ENCODE measurements at regions of chr17 and their contacts with region 1.

Region 1: GRCh38 chr17:43360739-43361505 is 37.9 kb upstream of the ARL4D start:
- DNase-seq: peak; percentile 68 to 97
- H3K4me3 ChIP-seq: peak overlapping the region; percentile 61 to 63
- H3K27ac ChIP-seq: peak overlapping the region; percentile 77 to 90
- H3K4me1 ChIP-seq: peaks cover 0 to 18% of the 10 kb centered on the region in 2 donors
- H3K27me3 ChIP-seq: no peaks in the 10 kb centered on the region
- CTCF ChIP-seq: no peak

Region 2: DNA sequence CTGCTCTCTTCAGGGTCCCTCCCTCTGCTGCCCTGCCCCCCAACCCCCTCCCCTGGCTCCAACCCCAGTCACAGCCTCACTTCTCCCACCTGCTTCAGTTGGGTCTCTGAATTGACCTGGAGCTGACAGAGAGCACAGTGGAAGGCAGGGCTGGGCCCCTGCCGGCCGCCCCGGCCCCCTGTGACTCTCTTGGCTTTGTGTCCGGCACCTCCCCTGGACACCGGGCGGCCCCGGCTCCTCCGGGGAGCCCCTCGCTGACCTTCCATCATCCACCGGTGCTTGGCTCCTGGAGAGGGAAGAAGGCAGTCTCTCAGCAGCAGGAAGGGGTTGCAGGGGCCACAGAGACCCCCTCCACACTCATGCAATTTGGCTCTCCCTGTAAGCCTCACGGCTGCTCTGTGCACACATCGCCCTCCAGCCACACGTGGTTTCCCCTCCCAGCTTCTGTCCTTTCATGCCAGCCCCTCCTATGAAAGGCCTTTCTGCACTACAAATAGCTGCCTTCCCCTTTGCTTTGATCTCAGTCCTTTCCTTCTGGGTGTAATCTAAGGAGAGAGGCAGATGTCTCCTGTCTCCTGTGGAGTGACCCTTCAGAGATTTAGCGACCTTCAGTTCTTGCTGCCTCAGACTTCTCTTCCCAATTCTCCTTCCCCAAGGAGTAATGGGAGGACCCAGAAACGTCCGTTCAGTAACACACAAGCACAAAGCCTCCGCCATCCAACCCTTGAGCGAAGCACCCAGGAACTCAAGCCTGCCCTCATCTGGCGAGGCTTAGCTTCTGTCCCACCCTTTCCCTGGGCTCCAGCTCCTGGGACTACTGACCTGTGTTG is 1332.7 kb before region 1 on chr17:
- intact Hi-C with region 1: no loop called
- DNase-seq: no peak
- H3K4me3 ChIP-seq: no peak overlapping the region
- H3K27ac ChIP-seq: no peak overlapping the region
- H3K4me1 ChIP-seq: peaks cover 0 to 11% of the 10 kb centered on the region in 2 donors
- H3K27me3 ChIP-seq: no peaks in the 10 kb centered on the region
- CTCF ChIP-seq: no peak

Region 3: GRCh38 chr17:43316522-43317142 is 44.3 kb before region 1 on chr17:
- intact Hi-C with region 1: loop called (anchors 2 kb)
- DNase-seq: peak in 1 of 2 donors; percentile 63
- H3K4me3 ChIP-seq: no peak overlapping the region
- H3K27ac ChIP-seq: no peak overlapping the region
- H3K4me1 ChIP-seq: peaks cover 0 to 2% of the 10 kb centered on the region in 2 donors
- H3K27me3 ChIP-seq: no peaks in the 10 kb centered on the region
- CTCF ChIP-seq: no peak

Region 4: DNA sequence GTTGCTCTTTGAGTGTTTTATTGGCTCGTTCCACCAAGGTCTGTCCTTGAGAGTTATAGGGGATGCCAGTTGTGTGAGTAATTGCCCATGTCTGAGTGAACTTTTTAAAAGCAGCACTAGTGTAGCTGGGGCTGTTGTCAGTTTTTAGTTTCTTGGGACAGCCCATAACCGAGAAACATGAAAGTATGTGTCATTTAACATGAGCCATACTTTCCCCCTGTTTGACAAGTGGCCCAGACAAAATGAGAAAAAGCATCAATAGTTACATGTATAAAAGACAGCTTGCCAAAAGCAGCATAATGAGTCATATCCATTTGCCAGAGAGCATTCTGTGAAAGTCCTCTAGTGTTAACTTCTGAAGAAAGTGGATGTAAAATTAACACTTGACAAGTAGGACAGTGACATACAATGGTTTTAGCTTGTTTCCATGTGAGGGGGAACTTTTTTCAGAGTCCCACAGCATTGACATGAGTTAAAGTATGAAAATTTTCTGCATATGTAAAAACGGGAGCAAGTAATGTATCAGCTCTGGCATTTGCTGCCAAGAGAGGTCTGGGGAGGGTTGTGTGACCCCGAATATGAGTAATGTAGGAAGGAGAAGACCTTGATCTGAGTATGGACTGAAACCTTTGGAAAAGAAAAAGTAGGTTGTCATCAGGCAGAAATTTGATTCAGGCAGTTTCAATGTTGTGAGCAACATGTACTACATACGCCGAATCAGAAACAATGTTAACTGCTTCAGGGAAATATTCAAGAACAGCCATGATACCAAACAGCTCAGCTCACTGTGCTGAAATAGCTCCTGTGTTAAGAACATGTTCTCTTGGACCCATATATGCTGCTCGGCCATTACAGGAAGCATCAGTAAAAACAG is 19.0 kb before region 1 on chr17:
- intact Hi-C with region 1: loop called (anchors 1 kb)
- DNase-seq: no peak
- H3K4me3 ChIP-seq: no peak overlapping the region
- H3K27ac ChIP-seq: peak overlapping the region; percentile 20 to 33
- H3K4me1 ChIP-seq: peaks cover 0 to 5% of the 10 kb centered on the region in 2 donors
- H3K27me3 ChIP-seq: no peaks in the 10 kb centered on the region
- CTCF ChIP-seq: no peak

Region 5: GRCh38 chr17:43388359-43389045 is 27.6 kb after region 1 on chr17:
- intact Hi-C with region 1: loop called (anchors 2 kb)
- DNase-seq: peak; percentile 84 to 97
- H3K4me3 ChIP-seq: peak overlapping the region; percentile 61 to 89
- H3K27ac ChIP-seq: peak overlapping the region; percentile 99
- H3K4me1 ChIP-seq: peaks cover 3 to 10% of the 10 kb centered on the region in 2 donors
- H3K27me3 ChIP-seq: no peaks in the 10 kb centered on the region
- CTCF ChIP-seq: no peak

Region 6: DNA sequence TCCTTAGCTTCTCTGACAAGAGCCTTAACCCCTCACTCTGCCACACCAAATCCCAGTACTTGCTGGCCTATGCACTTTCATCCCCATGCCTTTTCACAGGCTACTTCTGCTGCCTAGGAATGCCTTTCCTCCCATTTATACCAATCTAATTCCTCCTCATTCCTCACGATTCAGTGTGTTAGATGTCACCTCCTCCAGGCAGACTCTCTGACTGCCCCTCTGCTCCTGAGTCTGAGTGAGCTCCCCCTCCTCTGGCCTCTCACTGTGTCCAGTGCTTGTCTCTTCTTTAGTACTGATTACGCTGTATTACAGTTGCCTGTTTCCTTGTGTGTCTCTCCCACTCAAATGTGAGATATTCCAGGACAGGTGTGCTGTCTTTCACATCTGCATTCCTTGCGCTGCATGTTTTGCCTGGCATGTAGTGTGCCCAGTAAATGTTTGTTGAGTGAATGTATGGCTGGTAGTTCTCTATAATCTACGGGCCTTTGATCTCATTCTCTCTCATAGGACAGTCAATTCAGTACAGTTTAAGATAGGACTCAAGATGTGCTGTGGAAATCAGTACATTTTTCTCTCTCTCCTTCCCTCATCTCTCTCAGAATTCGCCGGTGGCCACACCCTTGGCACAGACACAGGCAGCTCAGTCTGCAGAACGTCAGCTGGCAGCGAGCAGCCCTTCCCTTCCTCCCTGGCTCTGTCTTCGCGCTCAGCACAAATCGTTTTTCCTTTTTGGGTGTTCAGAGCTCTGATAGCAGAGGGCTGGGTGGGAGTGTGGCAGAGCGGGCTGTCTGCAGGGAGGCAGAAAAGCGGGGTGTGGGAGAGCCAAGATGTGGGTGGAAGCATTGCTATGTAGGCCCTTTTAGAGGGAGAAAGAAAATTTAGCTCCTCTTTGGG is 56.3 kb after region 1 on chr17:
- intact Hi-C with region 1: no loop called
- DNase-seq: peak in 1 of 2 donors; percentile 73
- H3K4me3 ChIP-seq: peak overlapping the region in 1 of 2 donors; percentile 11
- H3K27ac ChIP-seq: peak overlapping the region; percentile 63 to 72
- H3K4me1 ChIP-seq: peaks cover 9 to 21% of the 10 kb centered on the region in 2 donors
- H3K27me3 ChIP-seq: no peaks in the 10 kb centered on the region
- CTCF ChIP-seq: no peak

Region 7: GRCh38 chr17:43900183-43900857 is 539.4 kb after region 1 on chr17:
- intact Hi-C with region 1: loop called (anchors 10 kb)
- DNase-seq: peak in 1 of 2 donors; percentile 90
- H3K4me3 ChIP-seq: peak overlapping the region; percentile 47 to 63
- H3K27ac ChIP-seq: no peak overlapping the region
- H3K4me1 ChIP-seq: peaks cover 7 to 14% of the 10 kb centered on the region in 2 donors
- H3K27me3 ChIP-seq: no peaks in the 10 kb centered on the region
- CTCF ChIP-seq: no peak